ENCODE measurements at regions of chr6 and their contacts with region 1.

Region 1: GRCh38 chr6:93036835-93037234 is 382.5 kb downstream of the EPHA7 start:
- DNase-seq: no peak

Region 2: GRCh38 chr6:92892600-92893170 is 144.2 kb before region 1 on chr6:
- intact Hi-C with region 1: no loop called
- DNase-seq: no peak

Region 3: DNA sequence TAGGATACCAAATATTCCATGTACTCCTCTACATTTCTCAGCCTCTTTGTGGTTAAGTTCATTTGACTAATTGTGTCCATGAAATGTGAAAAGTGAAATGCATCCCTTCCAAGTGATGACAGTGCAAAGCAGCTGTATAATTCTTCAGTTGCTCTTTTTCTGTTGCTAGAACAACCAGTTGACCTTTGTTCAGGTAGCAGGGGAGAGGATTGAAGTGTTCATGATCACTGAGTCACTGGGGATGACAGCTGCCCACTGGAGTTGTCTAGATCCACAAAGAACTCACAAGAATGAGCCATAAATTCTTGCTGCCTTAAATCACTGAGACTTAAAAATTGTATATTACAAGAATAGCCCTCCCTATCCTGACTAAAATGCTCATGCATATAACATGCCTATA is 127.9 kb after region 1 on chr6:
- intact Hi-C with region 1: no loop called
- DNase-seq: no peak

Region 4: DNA sequence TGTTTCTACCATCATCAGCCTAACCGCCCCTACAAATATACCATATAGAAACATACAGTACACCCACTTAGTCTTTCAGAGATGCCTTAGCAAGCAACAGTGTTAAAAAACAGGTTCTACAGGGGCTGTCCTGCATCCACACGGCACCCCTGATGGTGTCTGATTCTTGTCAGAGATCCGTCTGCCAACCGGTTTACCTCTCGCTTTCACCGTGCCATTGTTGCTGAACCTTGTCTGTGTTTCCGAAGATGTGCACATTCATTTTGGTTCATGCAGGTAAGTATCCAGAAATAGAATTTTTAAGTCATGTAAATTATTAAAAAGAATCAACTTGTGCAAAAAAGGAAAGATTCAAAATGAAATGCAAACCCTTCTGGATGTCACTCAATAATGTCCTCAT is 329.7 kb after region 1 on chr6:
- intact Hi-C with region 1: no loop called
- DNase-seq: no peak

Region 5: GRCh38 chr6:93419304-93420162 is 382.7 kb after region 1 on chr6 and contains the start of gene EPHA7:
- intact Hi-C with region 1: loop called (anchors 10 kb)
- DNase-seq: peak; percentile 92
- total RNA-seq, gene EPHA7: 6.2 TPM